Astrocyte of the cerebellum (primary cell): ENCODE measurements at regions of chr3 and their contacts with region 1.

Region 1: GRCh38 chr3:14210843-14211594 is 32.4 kb downstream of the LSM3 start:
- DNase-seq: peak; percentile 67
- H3K4me3 ChIP-seq: no peak overlapping the region
- CTCF ChIP-seq: no peak

Region 2: DNA sequence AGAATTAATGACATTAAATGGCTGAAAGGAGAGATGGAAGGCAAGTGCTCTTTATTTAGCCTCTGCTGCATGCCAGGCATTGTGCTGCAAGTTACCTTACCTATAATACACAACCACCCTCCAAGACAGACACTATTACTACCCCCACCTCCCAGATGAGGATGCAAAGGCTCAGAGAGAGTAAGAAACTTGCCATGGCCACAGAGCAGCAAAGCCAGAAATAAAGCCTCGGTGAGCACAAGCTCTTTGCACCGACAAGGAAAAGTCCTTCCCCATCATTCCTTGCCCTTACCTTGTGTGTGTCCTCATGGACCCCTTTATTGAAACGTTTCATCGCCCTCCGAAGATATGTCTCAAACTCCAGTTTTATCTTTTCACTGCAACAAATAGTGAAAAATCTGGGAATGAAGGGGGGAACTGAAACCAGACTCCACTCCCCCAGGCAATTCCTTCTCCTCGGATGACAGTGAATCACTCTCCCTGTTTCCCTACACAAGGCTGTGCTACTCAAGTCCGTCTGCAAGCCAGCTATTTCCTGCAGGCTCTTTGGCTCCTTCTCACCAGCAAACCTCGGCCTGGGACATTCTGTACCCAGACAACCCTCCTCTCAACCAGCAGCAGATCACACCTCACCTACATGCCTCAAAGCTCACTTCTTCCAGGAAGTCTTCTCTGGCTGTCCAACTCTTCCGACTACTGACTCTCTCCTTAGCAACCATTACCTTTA is 44.0 kb before region 1 on chr3:
- in situ Hi-C with region 1: loop called (anchors 5 kb)
- DNase-seq: no peak
- H3K4me3 ChIP-seq: no peak overlapping the region
- CTCF ChIP-seq: no peak

Region 3: DNA sequence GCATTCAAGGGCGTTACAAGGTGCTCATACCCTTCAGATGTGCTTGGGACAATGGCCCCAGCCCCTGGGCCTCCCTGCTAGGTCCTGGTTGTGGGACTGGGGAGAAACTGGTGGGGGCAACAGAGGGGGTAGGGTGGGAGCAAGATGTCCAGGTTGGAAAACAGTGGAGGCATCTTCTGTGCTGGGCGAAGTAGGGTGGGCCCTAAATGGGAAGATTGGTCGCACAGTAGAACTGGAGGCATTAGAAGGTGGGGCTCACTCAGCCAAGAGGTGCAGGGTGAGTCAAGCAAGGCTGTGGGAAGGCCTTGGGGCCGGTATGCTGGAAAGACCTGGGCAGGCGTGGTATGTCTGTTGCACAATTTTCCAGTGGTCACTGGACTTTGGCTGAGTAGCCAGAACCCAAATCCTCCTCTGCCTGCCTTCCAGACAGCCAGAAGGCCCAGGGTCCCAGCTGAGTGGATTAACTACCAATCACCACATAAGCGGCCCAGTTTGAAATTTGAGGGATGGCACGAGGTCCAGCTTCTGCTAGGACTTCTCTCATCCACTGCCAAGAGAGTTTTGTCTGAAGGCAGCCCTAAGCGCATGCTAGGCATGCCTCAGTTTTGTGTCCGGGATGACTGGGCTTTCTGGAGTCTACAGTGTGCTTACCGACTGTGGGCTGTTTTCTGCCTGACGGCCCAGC is 42.1 kb after region 1 on chr3:
- in situ Hi-C with region 1: loop called (anchors 5 kb)
- DNase-seq: no peak
- H3K4me3 ChIP-seq: no peak overlapping the region
- CTCF ChIP-seq: no peak